Left cardiac atrium (tissue), 4 donors: ENCODE measurements at regions of chr11 and their contacts with region 1.

Region 1: GRCh38 chr11:59680287-59681154 is 11.7 kb upstream of the PATL1 start:
- DNase-seq: peak; percentile 50
- ATAC-seq: peak; percentile 91 to 92

Region 2: GRCh38 chr11:59534676-59535075 is 145.8 kb before region 1 on chr11:
- intact Hi-C with region 1: loop called (anchors 5 kb)
- DNase-seq: no peak
- ATAC-seq: no peak

Region 3: GRCh38 chr11:60615497-60615896 is 935.0 kb after region 1 on chr11:
- intact Hi-C with region 1: no loop called
- DNase-seq: no peak
- ATAC-seq: no peak